ENCODE measurements at regions of chr19 and their contacts with region 1.

Region 1: DNA sequence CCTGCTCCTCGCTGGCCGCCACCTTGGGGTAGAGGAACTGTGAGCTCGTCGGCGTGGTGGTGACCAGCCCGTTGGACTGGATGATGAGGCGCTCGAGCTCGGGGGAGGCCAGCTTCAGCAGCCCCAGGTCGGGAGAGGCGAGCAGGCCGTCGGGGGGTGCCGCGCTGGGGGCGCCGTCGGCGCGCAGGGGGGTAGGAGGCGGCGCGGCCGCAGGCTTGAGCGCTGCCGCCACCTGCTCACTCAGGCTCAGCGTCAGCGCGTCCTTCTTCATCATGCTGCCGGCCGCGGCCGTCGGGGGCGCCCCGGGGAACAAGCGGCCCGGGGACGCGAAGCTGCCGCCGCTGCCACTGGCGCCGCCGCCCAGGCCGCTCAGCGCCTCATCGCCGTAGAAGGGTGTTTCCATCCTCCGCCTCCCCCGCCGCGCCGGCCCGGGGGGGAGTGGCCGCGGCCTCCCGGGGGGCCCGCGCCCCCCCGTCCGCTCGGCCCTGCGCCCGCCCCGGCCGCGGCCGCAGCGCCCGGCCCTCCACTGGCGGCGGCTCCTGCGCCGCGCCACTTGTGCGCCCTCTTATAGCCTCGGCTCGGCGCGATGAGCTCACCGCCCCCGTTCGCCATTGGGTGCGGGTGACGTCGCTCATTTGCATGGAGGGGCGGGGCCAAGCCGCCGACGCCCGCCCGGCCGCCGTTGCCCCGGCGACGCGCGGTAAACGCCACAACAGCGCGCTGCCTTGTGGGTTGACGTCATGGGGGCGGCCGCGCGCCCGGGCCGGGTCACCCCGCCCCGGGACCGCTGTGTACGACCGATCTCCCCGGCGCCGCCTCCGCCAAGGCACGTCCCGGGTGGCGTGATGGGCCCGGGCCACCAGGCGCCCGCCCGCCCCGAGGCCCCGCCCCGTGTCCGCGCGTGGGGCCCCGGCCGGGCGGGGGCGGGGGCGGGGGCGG is at the start of gene JUND:
- DNase-seq: peak; percentile 84
- H3K4me3 ChIP-seq: peak within 1 kb of the TSS; percentile 87
- H3K27me3 ChIP-seq: no peaks in the 10 kb centered on the region
- CTCF ChIP-seq: no peak
- polyA plus RNA-seq, gene JUND: 92.0 and 124 TPM in 2 replicates

Region 2: GRCh38 chr19:18176367-18177310 is 104.7 kb before region 1 on chr19:
- CTCF ChIA-PET with region 1: no interaction called
- POLR2A ChIA-PET with region 1: no interaction called
- DNase-seq: no peak
- H3K4me3 ChIP-seq: no peak overlapping the region
- H3K27me3 ChIP-seq: no peaks in the 10 kb centered on the region
- CTCF ChIP-seq: no peak

Region 3: DNA sequence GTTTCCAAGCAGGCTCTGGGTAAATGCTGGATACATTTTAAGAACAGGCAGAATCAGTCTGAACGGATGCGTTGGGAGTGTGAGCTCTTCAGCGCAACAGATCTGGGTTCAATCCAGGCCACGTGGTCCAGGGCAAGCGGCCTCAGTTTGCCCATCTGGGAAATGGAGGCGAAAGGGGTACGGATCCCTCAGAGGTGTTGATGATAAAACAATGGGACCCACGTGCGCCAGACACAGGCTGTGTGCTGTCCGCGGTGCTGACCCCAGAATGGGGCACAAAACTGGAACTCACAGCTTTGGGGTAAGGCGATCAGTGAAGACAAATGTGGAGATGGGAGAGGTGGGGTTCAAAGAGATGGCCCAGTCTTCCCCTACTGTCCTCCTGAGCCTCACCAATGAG is 42.0 kb before region 1 on chr19:
- CTCF ChIA-PET with region 1: no interaction called
- POLR2A ChIA-PET with region 1: no interaction called
- DNase-seq: no peak
- H3K4me3 ChIP-seq: no peak overlapping the region
- H3K27me3 ChIP-seq: peaks cover 3% of the 10 kb centered on the region
- CTCF ChIP-seq: no peak

Region 4: DNA sequence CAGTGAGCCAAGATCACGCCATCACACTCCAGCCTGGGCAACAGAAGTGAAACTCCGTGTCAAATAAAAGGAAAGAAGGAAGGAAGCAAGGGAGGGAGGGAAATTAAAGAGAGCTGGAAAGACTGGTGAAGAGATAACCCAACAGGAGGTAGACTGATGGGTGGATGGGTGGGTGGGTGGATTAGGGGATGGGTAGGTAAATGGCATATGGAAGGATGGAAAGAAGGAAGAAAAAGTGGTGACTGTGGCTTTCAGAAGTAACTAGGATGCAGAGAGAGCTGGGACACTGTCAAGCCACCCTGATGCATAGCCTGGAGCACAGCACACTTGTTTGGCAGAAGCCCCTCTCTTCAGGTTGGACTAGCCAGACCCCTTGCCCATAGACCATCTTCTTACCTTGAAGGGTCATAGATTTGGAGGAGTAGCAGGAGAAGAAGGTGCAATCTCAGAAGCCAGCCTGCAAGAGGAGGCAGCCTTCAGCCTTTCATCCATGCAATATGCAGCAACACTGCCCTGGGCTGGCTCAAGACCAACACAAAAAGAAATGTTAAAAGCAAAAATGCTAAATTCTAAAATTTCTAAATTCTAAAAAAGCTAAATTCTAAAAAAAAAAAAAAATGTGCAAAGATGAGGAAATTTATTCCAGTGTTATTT is 12.2 kb before region 1 on chr19:
- CTCF ChIA-PET with region 1: interaction called, 20 read pairs
- POLR2A ChIA-PET with region 1: no interaction called
- DNase-seq: no peak
- H3K4me3 ChIP-seq: no peak overlapping the region
- H3K27me3 ChIP-seq: no peaks in the 10 kb centered on the region
- CTCF ChIP-seq: no peak

Region 5: GRCh38 chr19:18304458-18305310 is 23.3 kb after region 1 on chr19:
- CTCF ChIA-PET with region 1: interaction called, 85 read pairs
- POLR2A ChIA-PET with region 1: interaction called, 21 read pairs
- DNase-seq: no peak
- H3K4me3 ChIP-seq: peak overlapping the region; percentile 27
- H3K27me3 ChIP-seq: no peaks in the 10 kb centered on the region
- CTCF ChIP-seq: 0 out of 2 replicates have a peak, but pooled peaks have one; percentile 12

Region 6: GRCh38 chr19:18322759-18323460 is 41.6 kb after region 1 on chr19 and contains the start of gene LSM4:
- CTCF ChIA-PET with region 1: interaction called, 252 read pairs
- POLR2A ChIA-PET with region 1: interaction called, 16 read pairs
- DNase-seq: peak; percentile 71
- H3K4me3 ChIP-seq: peak within 1 kb of the TSS; percentile 74
- H3K27me3 ChIP-seq: no peaks in the 10 kb centered on the region
- CTCF ChIP-seq: peak; percentile 22; the same call in 1 of the 2 replicates
- polyA plus RNA-seq, gene LSM4: 94.7 and 99.8 TPM in 2 replicates

Region 7: DNA sequence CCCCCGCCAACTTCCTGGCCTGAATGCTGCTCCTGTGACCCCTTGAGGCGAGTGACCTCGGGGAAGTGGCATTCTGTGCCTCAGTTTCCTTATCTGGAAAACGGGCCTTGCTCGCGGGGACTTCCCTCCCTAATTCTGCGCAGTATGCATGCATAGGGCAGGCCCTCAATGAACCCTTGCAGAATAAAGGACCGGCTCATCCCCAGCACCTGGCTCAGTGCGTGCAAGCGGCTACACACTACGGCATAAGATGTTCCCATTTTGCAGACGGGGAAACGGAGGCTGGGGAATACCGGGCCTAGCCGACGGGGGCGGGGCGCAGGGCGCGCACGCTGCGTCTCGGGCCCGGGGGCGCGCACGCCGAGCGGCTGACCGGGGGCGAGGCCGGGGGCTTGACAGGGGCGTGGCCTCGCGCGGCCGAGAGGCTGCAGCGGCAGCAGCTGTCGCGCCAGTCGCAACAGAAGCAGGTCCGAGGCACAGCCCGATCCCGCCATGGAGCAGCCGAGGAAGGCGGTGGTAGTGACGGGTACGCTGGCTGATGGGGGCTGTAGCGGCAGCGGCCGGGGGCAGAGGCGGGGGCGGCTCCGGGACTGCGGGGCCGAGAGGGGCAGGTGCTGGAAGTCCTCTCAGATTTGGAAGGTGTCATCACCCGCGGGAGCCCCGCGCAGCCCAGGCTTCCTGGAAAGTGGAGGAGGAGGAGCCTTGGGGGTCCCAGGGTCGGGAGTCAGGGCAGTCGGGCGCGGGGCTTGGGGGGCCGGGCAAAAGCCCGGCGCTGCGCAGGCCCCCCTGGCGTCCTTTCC is 59.0 kb after region 1 on chr19 and contains the start of gene PGPEP1:
- CTCF ChIA-PET with region 1: interaction called, 252 read pairs
- POLR2A ChIA-PET with region 1: no interaction called
- DNase-seq: no peak
- H3K4me3 ChIP-seq: peak within 1 kb of the TSS; percentile 83
- H3K27me3 ChIP-seq: no peaks in the 10 kb centered on the region; the same call in 1 of the 2 replicates
- CTCF ChIP-seq: no peak
- polyA plus RNA-seq, gene PGPEP1: 30.7 and 32.2 TPM in 2 replicates

Region 8: GRCh38 chr19:18419195-18419698 is 137.9 kb after region 1 on chr19 and contains the start of gene SSBP4:
- CTCF ChIA-PET with region 1: interaction called, 38 read pairs
- POLR2A ChIA-PET with region 1: interaction called, 3 read pairs
- DNase-seq: no peak
- H3K4me3 ChIP-seq: peak within 1 kb of the TSS; percentile 87
- H3K27me3 ChIP-seq: no peaks in the 10 kb centered on the region
- CTCF ChIP-seq: no peak
- polyA plus RNA-seq, gene SSBP4: 16.3 and 24.1 TPM in 2 replicates

Region 9: GRCh38 chr19:18469069-18469846 is 187.9 kb after region 1 on chr19:
- CTCF ChIA-PET with region 1: no interaction called
- POLR2A ChIA-PET with region 1: no interaction called
- DNase-seq: no peak
- H3K4me3 ChIP-seq: no peak overlapping the region
- H3K27me3 ChIP-seq: no peaks in the 10 kb centered on the region
- CTCF ChIP-seq: peak; percentile 85

Measured in BJ (cell line).